K562 (cell line): ENCODE measurements at regions of chr2 and their contacts with region 1.

Region 1: GRCh38 chr2:26469092-26469710 is 8.7 kb downstream of the OTOF start:
- DNase-seq: peak; percentile 76 to 87 (median 78)
- ATAC-seq: peak; percentile 70
- H3K4me3 ChIP-seq: no peak overlapping the region
- H3K27ac ChIP-seq: no peak overlapping the region
- H3K4me1 ChIP-seq: peaks cover 6 to 24% of the 10 kb centered on the region in 2 experiments; a peak in 4 of 5 replicates
- H3K27me3 ChIP-seq: peaks cover 0 to 5% of the 10 kb centered on the region in 2 experiments; a peak in 1 of 5 replicates
- CTCF ChIP-seq: peak; percentile 80 to 91 (median 88)
- EP300 ChIP-seq: no peak
- POLR2A ChIP-seq: no peak
- RAD21 ChIP-seq: peak; percentile 89 to 91

Region 2: DNA sequence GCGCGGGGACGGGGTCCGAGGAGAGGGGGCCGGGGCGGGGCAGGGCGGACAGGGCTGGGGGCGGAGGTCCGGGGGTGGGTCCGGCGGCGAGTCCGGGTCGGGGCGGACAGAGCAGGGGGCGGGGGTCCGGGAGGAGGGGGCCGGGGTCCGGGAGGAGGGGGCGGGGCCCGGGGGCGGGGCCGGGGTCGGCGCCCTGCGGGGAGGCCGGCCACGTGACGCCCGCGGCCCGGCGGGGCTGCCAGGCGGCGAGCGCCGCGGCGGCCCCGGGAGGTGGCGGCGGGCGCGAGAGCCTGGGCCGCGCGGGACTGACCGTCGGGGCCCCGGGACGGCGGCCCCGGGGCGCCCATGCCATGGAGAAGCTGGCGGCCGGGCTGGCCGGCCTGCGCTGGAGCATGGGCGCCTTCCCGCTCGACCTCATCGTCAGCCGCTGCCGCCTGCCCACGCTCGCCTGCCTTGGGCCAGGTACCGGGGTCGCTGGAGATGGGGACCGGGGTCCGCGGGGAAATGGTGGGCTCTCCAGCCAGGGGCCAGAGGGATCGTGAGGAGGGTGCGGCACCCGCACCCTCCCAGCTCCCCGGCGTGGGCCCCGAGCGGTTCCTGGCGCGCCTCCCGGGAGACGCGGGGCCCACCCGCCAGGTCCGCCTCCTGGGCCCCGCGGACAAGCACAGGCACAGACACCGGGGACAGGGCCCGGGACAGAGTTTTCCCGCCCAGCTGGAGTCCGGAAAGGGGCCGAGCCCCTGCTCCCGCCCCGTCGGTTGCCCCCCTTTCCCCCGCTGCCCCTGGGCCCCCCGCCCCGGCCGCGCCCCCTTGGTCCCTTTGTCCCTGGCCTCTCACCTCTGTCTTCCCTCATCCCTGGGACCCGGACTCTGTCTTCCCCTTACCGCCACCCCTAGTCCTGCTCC is 296.1 kb before region 1 on chr2 and contains the start of gene GAREM2:
- CTCF ChIA-PET with region 1: no interaction called
- POLR2A ChIA-PET with region 1: no interaction called
- in situ Hi-C with region 1: no loop called
- intact Hi-C with region 1: loop called (anchors 5 kb)
- DNase-seq: peak in 3 of 4 experiments; percentile 73 to 90 (median 89)
- ATAC-seq: peak; percentile 39
- H3K4me3 ChIP-seq: peak within 1 kb of the TSS; percentile 47
- H3K27ac ChIP-seq: no peak within 1 kb of the TSS
- H3K4me1 ChIP-seq: peaks cover 0 to 43% of the 10 kb centered on the region in 2 experiments; a peak in 2 of 5 replicates
- H3K27me3 ChIP-seq: no peaks in the 10 kb centered on the region
- CTCF ChIP-seq: no peak
- EP300 ChIP-seq: no peak
- POLR2A ChIP-seq: no peak
- RAD21 ChIP-seq: no peak
- polyA plus RNA-seq, gene GAREM2: 1.7 to 2.2 TPM

Region 3: DNA sequence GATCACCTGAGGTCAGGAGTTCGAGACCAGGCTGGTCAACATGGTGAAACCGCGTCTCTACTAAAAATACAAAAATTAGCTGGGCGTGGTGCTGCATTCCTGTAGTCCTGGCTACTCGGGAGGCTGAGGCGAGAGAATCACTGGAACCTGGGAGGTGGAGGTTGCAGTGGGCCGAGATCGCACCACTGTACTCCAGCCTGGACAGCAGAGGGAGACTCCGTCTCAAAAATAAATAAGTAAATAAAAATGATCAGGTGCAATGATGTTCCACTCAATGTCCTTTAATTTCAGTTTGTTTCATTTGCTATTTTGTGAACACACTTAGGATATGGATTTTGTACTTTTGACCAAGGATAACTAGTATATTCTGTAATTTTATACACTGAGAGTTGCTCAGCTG is 234.1 kb before region 1 on chr2:
- CTCF ChIA-PET with region 1: interaction called, 8 read pairs
- POLR2A ChIA-PET with region 1: no interaction called
- in situ Hi-C with region 1: loop called (anchors 5 kb)
- intact Hi-C with region 1: loop called (anchors 10 kb)
- DNase-seq: peak in 1 of 4 experiments; percentile 11
- ATAC-seq: peak; percentile 67; the same call in 2 of the 3 replicates
- H3K4me3 ChIP-seq: no peak overlapping the region
- H3K27ac ChIP-seq: no peak overlapping the region
- H3K4me1 ChIP-seq: no peaks in the 10 kb centered on the region
- H3K27me3 ChIP-seq: no peaks in the 10 kb centered on the region
- CTCF ChIP-seq: peak in 2 of 3 experiments; percentile 22 to 35; a peak in 2 of 6 replicates
- EP300 ChIP-seq: no peak
- POLR2A ChIP-seq: no peak
- RAD21 ChIP-seq: peak in 1 of 2 experiments; percentile 26; a peak in 3 of 4 replicates

Region 4: GRCh38 chr2:26244309-26245121 is 224.7 kb before region 1 on chr2 and contains the starts of genes HADHA and HADHB:
- CTCF ChIA-PET with region 1: interaction called, 3 read pairs
- POLR2A ChIA-PET with region 1: no interaction called
- in situ Hi-C with region 1: loop called (anchors 5 kb)
- intact Hi-C with region 1: loop called (anchors 10 kb)
- DNase-seq: peak; percentile 90 to 93 (median 91)
- ATAC-seq: peak; percentile 85
- H3K4me3 ChIP-seq: peak within 1 kb of the TSS; percentile 82
- H3K27ac ChIP-seq: peak within 1 kb of the TSS; percentile 95
- H3K4me1 ChIP-seq: peaks cover 9 to 16% of the 10 kb centered on the region in 2 experiments; a peak in 3 of 5 replicates
- H3K27me3 ChIP-seq: no peaks in the 10 kb centered on the region
- CTCF ChIP-seq: peak; percentile 13 to 18 (median 14); a peak in 2 of 6 replicates
- EP300 ChIP-seq: peak; percentile 47
- POLR2A ChIP-seq: peak; percentile 91
- RAD21 ChIP-seq: 0 out of 4 replicates have a peak, but pooled peaks of 1 of the 2 experiments have one; percentile 4
- polyA plus RNA-seq, gene HADHA: 152 to 326 TPM
- polyA plus RNA-seq, gene HADHB: 198 to 199 TPM

Region 5: GRCh38 chr2:26577434-26578112 is 108.4 kb after region 1 on chr2:
- CTCF ChIA-PET with region 1: interaction called, 16 read pairs
- POLR2A ChIA-PET with region 1: no interaction called
- in situ Hi-C with region 1: no loop called
- intact Hi-C with region 1: loop called (anchors 1 kb)
- DNase-seq: peak; percentile 74 to 79 (median 78)
- ATAC-seq: peak; percentile 92
- H3K4me3 ChIP-seq: no peak overlapping the region
- H3K27ac ChIP-seq: no peak overlapping the region
- H3K4me1 ChIP-seq: no peaks in the 10 kb centered on the region; a peak in 1 of 5 replicates
- H3K27me3 ChIP-seq: peaks cover 39 to 96% of the 10 kb centered on the region in 2 experiments
- CTCF ChIP-seq: peak; percentile 89 to 94 (median 92)
- EP300 ChIP-seq: no peak
- POLR2A ChIP-seq: no peak
- RAD21 ChIP-seq: peak; percentile 88 to 92